ENCODE measurements at regions of chr13 and their contacts with region 1.

Region 1: GRCh38 chr13:36420437-36420891 is 11.8 kb upstream of the CCNA1 start:
- DNase-seq: peak; percentile 30 to 64
- ATAC-seq: peak; percentile 55 to 77 (median 69)
- H3K4me3 ChIP-seq: no peak overlapping the region
- H3K27ac ChIP-seq: no peak overlapping the region
- H3K4me1 ChIP-seq: peaks cover 0 to 19% (median 0%) of the 10 kb centered on the region in 9 donors
- H3K27me3 ChIP-seq: peaks cover 0 to 22% (median 0%) of the 10 kb centered on the region in 7 donors
- CTCF ChIP-seq: peak; percentile 73 to 92 (median 87)

Region 2: GRCh38 chr13:36981156-36981743 is 560.8 kb after region 1 on chr13:
- intact Hi-C with region 1: loop called in 3 of 10 experiments (anchors 10 kb)
- DNase-seq: no peak
- ATAC-seq: no peak
- H3K4me3 ChIP-seq: no peak overlapping the region
- H3K27ac ChIP-seq: no peak overlapping the region
- H3K4me1 ChIP-seq: no peaks in the 10 kb centered on the region
- H3K27me3 ChIP-seq: no peaks in the 10 kb centered on the region
- CTCF ChIP-seq: peak in 8 of 9 donors; percentile 13 to 68 (median 60)

Measured in heart right ventricle (tissue), 16 donors.